Vagina (tissue), 2 donors: ENCODE measurements at regions of chr1 and their contacts with region 1.

Region 1: GRCh38 chr1:27603681-27604578 is at the start of gene AHDC1:
- DNase-seq: no peak
- H3K4me3 ChIP-seq: peak within 1 kb of the TSS; percentile 66 to 79
- H3K27ac ChIP-seq: peak within 1 kb of the TSS; percentile 97
- H3K4me1 ChIP-seq: peaks cover 68% of the 10 kb centered on the region
- H3K27me3 ChIP-seq: no peaks in the 10 kb centered on the region
- CTCF ChIP-seq: peak in 1 of 3 experiments; percentile 19
- POLR2A ChIP-seq: peak in 1 of 2 donors; percentile 97
- total RNA-seq, gene AHDC1: 62.4 TPM

Region 2: DNA sequence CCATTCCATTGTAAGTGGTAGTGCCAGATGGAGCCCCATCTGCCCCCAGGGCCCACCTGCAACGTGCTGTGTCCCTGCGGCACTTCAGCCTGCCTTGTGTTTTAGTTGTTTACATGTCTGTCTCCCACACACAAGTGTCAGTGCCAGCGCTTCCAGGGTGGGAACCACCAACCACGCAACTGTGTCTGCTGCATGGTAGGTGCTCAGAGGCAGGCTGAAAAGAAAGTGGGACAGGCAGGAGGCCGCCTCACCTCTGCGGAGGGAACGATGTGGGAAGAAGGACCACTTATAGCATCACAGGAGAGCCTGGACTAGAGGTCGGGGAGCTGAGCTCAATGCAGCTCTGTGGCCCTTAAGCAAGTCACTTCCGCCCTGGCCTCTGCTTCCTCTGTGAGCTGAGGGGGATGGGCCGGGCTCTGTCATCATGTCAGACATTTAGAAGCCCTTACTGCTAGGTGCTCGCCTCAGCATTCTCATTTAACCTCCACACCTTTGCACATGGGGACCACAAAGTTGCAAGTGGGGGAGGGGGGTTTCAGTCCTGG is 466.9 kb before region 1 on chr1:
- intact Hi-C with region 1: no loop called
- DNase-seq: no peak
- H3K4me3 ChIP-seq: no peak overlapping the region
- H3K27ac ChIP-seq: peak overlapping the region; percentile 59
- H3K4me1 ChIP-seq: peaks cover 60% of the 10 kb centered on the region
- H3K27me3 ChIP-seq: no peaks in the 10 kb centered on the region
- CTCF ChIP-seq: no peak
- POLR2A ChIP-seq: no peak

Region 3: GRCh38 chr1:27300341-27301051 is 303.4 kb before region 1 on chr1:
- intact Hi-C with region 1: loop called (anchors 10 kb)
- DNase-seq: peak in 1 of 2 donors; percentile 93
- H3K4me3 ChIP-seq: no peak overlapping the region
- H3K27ac ChIP-seq: peak overlapping the region; percentile 90
- H3K4me1 ChIP-seq: peaks cover 41% of the 10 kb centered on the region
- H3K27me3 ChIP-seq: no peaks in the 10 kb centered on the region
- CTCF ChIP-seq: peak; percentile 95 to 99 (median 99)
- POLR2A ChIP-seq: no peak

Region 4: DNA sequence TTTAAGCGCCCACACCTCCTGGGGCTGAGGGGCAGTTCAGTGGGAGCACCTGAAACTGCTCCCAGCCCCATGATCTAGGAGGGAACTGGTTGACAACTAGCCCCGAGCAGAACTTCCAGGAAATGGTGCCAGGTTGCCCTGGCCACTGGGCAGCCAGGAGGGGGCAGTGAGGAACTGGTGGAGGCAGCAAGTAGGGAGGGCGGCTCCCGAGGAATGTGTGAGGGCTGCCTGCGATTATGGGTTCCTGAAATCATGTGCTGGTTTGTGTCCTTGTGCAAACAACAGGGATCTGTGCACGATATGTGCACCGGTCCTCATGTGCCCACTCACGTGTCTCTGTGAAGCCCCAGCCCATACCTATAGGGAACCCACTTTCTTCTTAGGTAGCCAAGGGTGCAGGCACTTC is 201.6 kb before region 1 on chr1:
- intact Hi-C with region 1: loop called (anchors 5 kb)
- DNase-seq: no peak
- H3K4me3 ChIP-seq: no peak overlapping the region
- H3K27ac ChIP-seq: peak overlapping the region; percentile 87
- H3K4me1 ChIP-seq: peaks cover 81% of the 10 kb centered on the region
- H3K27me3 ChIP-seq: no peaks in the 10 kb centered on the region
- CTCF ChIP-seq: peak; percentile 38 to 63 (median 46)
- POLR2A ChIP-seq: no peak

Region 5: DNA sequence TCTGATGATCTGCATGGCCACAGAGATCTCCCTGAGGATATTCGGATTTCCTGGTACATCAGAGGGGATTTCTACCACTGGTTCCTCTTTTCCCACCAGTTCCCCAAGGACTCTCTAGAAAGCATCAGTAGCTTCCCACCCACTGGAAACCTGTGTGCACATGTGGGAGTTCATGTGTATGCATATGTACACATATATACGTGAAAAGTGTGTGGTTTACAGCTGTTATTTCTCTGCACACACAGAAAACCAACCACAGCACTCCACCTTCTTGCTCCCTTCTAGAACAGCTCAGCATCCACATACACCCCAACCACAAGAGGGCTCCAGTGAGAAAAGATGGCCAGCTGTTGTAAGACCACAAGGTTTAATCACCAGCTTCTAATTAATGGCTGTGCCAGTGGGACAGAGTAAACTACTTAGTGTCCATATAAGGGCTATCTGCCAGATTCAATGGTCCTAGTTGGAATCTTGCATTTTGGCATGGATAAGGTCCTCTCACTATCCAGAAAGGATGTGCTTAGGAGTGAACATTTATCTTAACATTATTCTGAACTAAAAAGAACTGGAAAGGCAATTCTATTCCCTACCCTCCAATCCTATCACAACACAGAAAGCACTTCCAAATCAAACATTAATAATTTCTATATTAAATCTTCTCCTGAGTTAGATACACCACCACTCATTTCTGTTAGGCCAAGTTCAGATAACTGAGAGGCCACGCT is 187.4 kb before region 1 on chr1:
- intact Hi-C with region 1: loop called (anchors 5 kb)
- DNase-seq: no peak
- H3K4me3 ChIP-seq: no peak overlapping the region
- H3K27ac ChIP-seq: peak overlapping the region; percentile 73
- H3K4me1 ChIP-seq: peaks cover 44% of the 10 kb centered on the region
- H3K27me3 ChIP-seq: no peaks in the 10 kb centered on the region
- CTCF ChIP-seq: peak in 1 of 3 experiments; percentile 46
- POLR2A ChIP-seq: no peak

Region 6: DNA sequence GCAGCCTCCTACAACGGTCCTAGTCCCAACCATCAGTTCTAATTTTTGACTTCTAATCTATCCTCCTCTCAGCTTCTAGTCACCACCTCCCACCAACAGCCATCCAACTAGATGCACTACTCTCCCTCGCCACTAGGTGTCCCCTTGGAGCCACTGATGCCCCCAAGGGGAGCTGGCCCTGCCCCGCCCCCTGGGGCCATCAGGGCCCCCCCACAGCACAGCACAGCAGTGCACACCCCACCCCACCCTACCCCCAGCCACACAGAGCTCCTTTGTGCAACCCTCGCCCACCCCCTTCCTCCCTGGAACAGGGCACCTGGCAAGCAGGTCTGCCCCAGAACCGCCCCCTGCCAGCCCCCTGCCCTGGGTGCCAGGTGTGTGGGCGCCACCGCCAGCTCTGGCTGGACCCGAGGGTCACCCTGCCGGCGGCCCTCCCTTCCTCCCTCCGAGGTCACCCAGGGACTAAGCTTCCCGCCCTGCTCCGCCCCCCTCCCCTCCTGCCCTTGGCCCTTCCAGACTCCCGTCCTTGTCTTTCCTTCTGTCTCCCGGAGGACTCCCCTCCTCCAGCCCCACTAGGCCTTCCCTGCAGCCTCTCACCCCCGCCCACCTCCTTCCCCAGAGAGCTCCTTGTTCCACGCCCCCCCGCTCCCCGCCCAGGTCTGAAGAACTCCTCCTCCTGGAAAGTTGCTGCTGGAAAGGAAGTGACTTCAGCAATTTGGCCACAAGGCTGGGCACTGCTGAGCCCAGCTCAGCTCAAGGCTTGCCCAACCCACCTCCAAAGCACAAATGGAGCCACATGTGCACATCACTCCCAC is 46.9 kb before region 1 on chr1:
- intact Hi-C with region 1: loop called (anchors 2 kb)
- DNase-seq: peak in 1 of 2 donors; percentile 98
- H3K4me3 ChIP-seq: peak overlapping the region; percentile 24 to 30
- H3K27ac ChIP-seq: peak overlapping the region; percentile 96
- H3K4me1 ChIP-seq: peaks cover 85% of the 10 kb centered on the region
- H3K27me3 ChIP-seq: no peaks in the 10 kb centered on the region
- CTCF ChIP-seq: peak; percentile 66 to 94 (median 75)
- POLR2A ChIP-seq: no peak

Region 7: GRCh38 chr1:27741121-27741520 is 137.2 kb after region 1 on chr1:
- intact Hi-C with region 1: no loop called
- DNase-seq: no peak
- H3K4me3 ChIP-seq: no peak overlapping the region
- H3K27ac ChIP-seq: no peak overlapping the region
- H3K4me1 ChIP-seq: no peaks in the 10 kb centered on the region
- H3K27me3 ChIP-seq: no peaks in the 10 kb centered on the region
- CTCF ChIP-seq: no peak
- POLR2A ChIP-seq: no peak

Region 8: DNA sequence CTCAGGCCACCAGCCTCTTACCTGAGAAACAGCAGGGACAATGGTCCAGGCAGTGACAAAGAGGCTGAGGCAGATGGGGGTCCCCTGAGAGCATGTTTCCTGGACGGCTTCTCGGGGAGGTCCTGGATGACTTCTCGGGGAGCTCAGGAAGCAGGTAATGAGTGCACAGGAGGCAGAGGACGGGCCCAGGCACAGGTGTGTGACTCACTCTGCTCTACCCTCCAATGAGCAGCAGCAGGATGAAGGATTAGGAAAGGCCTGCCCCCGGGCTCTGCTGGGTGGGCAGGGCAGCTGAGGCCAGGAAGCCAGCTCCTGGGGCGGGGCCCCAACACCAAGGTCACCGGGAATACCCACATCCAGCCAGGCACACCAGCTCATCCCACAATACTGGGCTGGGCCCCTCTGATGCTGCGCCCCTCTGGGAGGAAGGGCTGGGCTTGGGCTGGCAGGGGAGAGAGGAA is 589.8 kb after region 1 on chr1:
- intact Hi-C with region 1: no loop called
- DNase-seq: no peak
- H3K4me3 ChIP-seq: no peak overlapping the region
- H3K27ac ChIP-seq: no peak overlapping the region
- H3K4me1 ChIP-seq: peaks cover 23% of the 10 kb centered on the region
- H3K27me3 ChIP-seq: no peaks in the 10 kb centered on the region
- CTCF ChIP-seq: no peak
- POLR2A ChIP-seq: no peak